ENCODE measurements at regions of chr17 and their contacts with region 1.

Region 1: GRCh38 chr17:14211801-14212200 is 24.9 kb downstream of the CDRT15 start:
- DNase-seq: peak; percentile 53
- ATAC-seq: peak; percentile 24
- H3K4me3 Mint-ChIP-seq: no peak overlapping the region
- H3K27ac Mint-ChIP-seq: no peak overlapping the region
- H3K4me1 Mint-ChIP-seq: peaks cover 17% of the 10 kb centered on the region
- H3K27me3 Mint-ChIP-seq: no peaks in the 10 kb centered on the region
- CTCF ChIP-seq: peak; percentile 67

Region 2: DNA sequence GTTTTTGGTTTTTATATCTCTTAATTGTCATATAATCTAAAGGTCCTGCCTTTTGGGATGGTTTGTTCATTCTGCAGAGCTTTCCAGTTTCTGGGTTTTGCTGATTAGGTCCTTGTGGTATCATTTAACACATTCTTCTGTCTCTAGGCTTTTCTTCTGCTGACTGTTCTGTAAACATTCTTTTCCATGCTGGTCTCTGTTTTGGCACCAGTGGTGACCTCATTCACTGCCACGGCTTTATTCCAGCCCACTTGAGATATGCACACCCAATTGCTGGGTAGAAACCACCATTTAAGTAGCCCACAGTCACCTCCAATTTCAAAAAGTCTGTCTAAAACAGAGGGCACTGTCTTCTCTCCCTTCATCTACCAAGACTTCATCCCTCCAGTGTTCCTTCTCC is 173.6 kb before region 1 on chr17:
- CTCF ChIA-PET with region 1: no interaction called
- POLR2A ChIA-PET with region 1: no interaction called
- intact Hi-C with region 1: no loop called
- DNase-seq: no peak
- ATAC-seq: no peak
- H3K4me3 Mint-ChIP-seq: no peak overlapping the region
- H3K27ac Mint-ChIP-seq: no peak overlapping the region
- H3K4me1 Mint-ChIP-seq: peaks cover 12% of the 10 kb centered on the region
- H3K27me3 Mint-ChIP-seq: no peaks in the 10 kb centered on the region
- CTCF ChIP-seq: no peak

Region 3: DNA sequence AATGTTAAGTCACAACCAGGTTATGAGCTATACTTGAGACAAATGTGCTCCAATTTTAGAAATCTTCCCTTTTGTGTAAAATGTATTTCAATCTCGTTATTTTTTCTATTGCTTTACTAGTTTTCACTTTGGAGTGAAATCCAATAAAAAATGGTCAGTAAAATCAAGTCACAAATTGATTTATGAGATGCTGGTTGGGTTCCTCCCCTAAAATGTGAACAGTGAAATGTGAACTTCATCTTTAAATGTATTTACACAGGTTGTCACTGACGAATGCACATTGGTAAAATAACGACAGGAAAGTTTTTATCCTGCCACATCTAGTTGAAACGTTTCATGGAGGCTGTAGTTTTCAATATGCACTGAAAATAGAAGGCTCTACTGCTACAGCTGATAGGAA is 86.9 kb before region 1 on chr17:
- CTCF ChIA-PET with region 1: no interaction called
- POLR2A ChIA-PET with region 1: no interaction called
- intact Hi-C with region 1: no loop called
- DNase-seq: no peak
- ATAC-seq: no peak
- H3K4me3 Mint-ChIP-seq: no peak overlapping the region
- H3K27ac Mint-ChIP-seq: no peak overlapping the region
- H3K4me1 Mint-ChIP-seq: peaks cover 46% of the 10 kb centered on the region
- H3K27me3 Mint-ChIP-seq: no peaks in the 10 kb centered on the region
- CTCF ChIP-seq: no peak

Region 4: DNA sequence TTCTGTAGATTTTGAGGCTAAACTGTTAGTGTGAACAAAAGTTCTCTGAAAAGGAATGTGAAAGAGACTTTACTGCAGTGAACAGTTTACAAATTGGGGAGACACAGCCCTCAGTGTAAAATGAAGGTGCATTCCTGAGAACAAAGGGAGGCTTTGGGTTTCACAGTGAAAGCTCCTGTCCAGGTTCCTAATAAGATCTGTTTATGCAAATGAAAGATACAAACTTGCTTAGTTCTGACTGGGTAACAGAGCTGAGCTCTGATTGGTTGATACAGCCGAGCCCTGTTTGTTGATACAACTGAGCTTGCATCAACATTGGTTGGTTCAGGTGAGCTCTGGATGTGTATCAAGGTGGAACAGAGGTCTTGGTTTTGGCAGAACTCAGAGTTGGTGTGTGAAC is 33.2 kb after region 1 on chr17:
- CTCF ChIA-PET with region 1: interaction called, 15 read pairs
- POLR2A ChIA-PET with region 1: no interaction called
- intact Hi-C with region 1: no loop called
- DNase-seq: no peak
- ATAC-seq: no peak
- H3K4me3 Mint-ChIP-seq: no peak overlapping the region
- H3K27ac Mint-ChIP-seq: no peak overlapping the region
- H3K4me1 Mint-ChIP-seq: no peaks in the 10 kb centered on the region
- H3K27me3 Mint-ChIP-seq: peaks cover 2% of the 10 kb centered on the region
- CTCF ChIP-seq: no peak

Measured in activated CD8-positive, alpha-beta T cell treated with anti-CD3 and anti-CD28 coated beads for 36 hours (primary cell).